Heart right ventricle (tissue), 16 donors: ENCODE measurements at regions of chr12 and their contacts with region 1.

Region 1: GRCh38 chr12:49121047-49121696 is 10.0 kb downstream of the TUBA1B start:
- DNase-seq: peak in 1 of 2 donors; percentile 48
- ATAC-seq: peak in 7 of 8 donors; percentile 50 to 89 (median 76)
- H3K4me3 ChIP-seq: no peak overlapping the region
- H3K27ac ChIP-seq: no peak overlapping the region
- H3K4me1 ChIP-seq: peaks cover 0 to 3% (median 0%) of the 10 kb centered on the region in 9 donors
- H3K27me3 ChIP-seq: no peaks in the 10 kb centered on the region
- CTCF ChIP-seq: peak; percentile 33 to 74 (median 64)

Region 2: DNA sequence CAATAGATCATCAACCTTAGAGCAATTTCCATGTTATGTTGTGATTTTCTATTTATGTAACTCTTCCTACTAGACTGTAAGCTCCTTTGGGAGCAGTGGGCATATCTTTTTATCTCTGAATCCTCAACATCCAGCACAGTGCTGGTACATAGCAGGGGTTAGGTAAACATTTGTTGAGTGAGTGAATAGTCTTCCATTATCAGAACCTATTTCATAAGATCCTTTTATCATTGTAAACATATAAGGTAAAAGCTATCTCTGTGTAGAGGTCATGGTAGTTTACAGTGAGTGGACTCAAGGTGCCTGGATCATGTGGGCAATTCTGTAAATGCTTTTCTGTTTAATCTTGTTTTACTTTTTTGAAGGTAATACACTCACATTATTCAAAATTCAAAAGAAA is 211.0 kb before region 1 on chr12:
- intact Hi-C with region 1: no loop called
- DNase-seq: no peak
- ATAC-seq: no peak
- H3K4me3 ChIP-seq: no peak overlapping the region
- H3K27ac ChIP-seq: no peak overlapping the region
- H3K4me1 ChIP-seq: no peaks in the 10 kb centered on the region
- H3K27me3 ChIP-seq: no peaks in the 10 kb centered on the region
- CTCF ChIP-seq: no peak

Region 3: GRCh38 chr12:49069507-49070346 is 51.4 kb before region 1 on chr12 and contains the start of gene RHEBL1:
- intact Hi-C with region 1: loop called in 7 of 10 experiments (anchors 2 to 10 kb)
- DNase-seq: peak; percentile 97 to 99
- ATAC-seq: peak; percentile 100
- H3K4me3 ChIP-seq: peak within 1 kb of the TSS; percentile 51 to 86 (median 68)
- H3K27ac ChIP-seq: peak within 1 kb of the TSS in 7 of 10 donors; percentile 30 to 74 (median 59)
- H3K4me1 ChIP-seq: peaks cover 7 to 18% (median 12%) of the 10 kb centered on the region in 9 donors
- H3K27me3 ChIP-seq: no peaks in the 10 kb centered on the region
- CTCF ChIP-seq: no peak
- total RNA-seq, gene RHEBL1: 0.23 to 1.9 (median 0.41) TPM in 8 of 10 donors, not detected in the others

Region 4: DNA sequence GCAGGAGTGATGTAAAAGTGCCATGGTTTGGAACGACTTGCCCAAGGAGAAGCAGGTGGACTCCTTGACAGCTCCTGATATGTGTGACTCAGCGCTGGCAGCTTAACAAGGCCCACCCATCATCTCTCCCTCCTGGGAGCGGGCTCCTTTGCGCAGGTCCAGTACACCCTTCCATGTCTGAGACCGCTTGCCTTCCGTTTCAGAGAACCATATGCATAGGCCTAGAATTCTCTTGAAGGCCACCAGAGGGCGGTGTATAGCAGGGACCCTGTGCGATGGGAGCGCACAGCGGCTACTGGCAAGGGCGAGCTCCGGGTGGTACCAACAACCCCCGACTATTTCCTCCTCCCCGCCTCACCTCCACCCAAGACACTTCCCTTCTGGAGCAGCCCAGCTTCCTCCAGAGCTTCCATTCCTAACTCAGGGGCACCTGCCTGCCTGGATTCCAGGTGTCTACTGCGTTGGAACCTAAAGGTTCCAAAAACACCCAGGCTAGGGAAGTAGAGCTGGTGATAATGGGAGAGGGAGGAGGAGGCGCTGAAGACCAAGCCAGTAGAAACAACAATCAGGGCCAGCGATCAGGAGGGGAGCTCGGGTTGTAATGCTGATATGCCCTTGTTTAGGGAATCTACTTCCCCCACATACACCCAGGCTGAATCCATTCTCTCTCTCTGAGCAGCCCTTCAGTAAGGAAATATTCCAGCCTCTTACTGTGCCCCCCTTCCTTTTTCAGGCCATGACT is 32.8 kb before region 1 on chr12:
- intact Hi-C with region 1: loop called in 9 of 10 experiments (anchors 1 to 5 kb)
- DNase-seq: peak; percentile 61 to 81
- ATAC-seq: peak; percentile 86 to 92 (median 90)
- H3K4me3 ChIP-seq: peak overlapping the region in 5 of 10 donors; percentile 13 to 24 (median 16)
- H3K27ac ChIP-seq: no peak overlapping the region
- H3K4me1 ChIP-seq: peaks cover 26 to 56% (median 51%) of the 10 kb centered on the region in 9 donors
- H3K27me3 ChIP-seq: peaks cover 7 to 51% (median 41%) of the 10 kb centered on the region in 7 donors
- CTCF ChIP-seq: peak; percentile 85 to 95 (median 92)

Region 5: GRCh38 chr12:49707128-49707811 is 586.1 kb after region 1 on chr12 and contains the start of gene FMNL3:
- intact Hi-C with region 1: no loop called
- DNase-seq: peak; percentile 97 to 99
- ATAC-seq: peak; percentile 96 to 99 (median 97)
- H3K4me3 ChIP-seq: peak within 1 kb of the TSS; percentile 67 to 98 (median 94)
- H3K27ac ChIP-seq: peak within 1 kb of the TSS; percentile 88 to 99 (median 98)
- H3K4me1 ChIP-seq: peaks cover 9 to 46% (median 36%) of the 10 kb centered on the region in 9 donors
- H3K27me3 ChIP-seq: peaks cover 0 to 7% (median 0%) of the 10 kb centered on the region in 7 donors
- CTCF ChIP-seq: peak in 8 of 9 donors; percentile 94 to 98 (median 96)
- total RNA-seq, gene FMNL3: 10.1 to 19.6 (median 12.0) TPM